Activated CD4-positive, alpha-beta memory T cell treated with anti-CD3 and anti-CD28 coated beads for 36 hours (primary cell): ENCODE measurements at regions of chr5 and their contacts with region 1.

Region 1: DNA sequence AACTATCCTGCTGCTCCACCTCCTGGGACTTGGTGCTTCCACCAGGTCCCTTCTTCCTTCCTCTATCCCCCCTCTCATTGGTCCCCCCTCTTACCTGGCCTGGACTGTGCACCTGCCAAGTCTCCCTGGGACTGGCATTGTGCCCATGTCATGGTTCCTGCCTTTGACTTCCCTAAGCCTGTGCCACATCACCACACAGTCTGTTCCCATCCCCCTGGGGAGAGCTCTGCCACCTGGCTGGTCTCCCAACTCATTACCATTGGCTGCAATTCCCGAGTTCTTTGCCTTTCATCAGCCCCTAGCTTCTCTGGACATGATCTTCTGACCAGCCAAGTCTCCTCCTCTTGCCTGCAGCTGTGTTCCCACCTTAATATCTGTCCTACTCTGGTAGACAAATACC is 180.3 kb downstream of the SREK1 start:
- DNase-seq: no peak
- H3K4me3 Mint-ChIP-seq: no peak overlapping the region
- H3K27ac Mint-ChIP-seq: no peak overlapping the region
- H3K4me1 Mint-ChIP-seq: peaks cover 10% of the 10 kb centered on the region
- H3K27me3 Mint-ChIP-seq: peaks cover 21% of the 10 kb centered on the region

Region 2: GRCh38 chr5:65907138-65907537 is 417.2 kb before region 1 on chr5:
- CTCF ChIA-PET with region 1: no interaction called
- POLR2A ChIA-PET with region 1: no interaction called
- intact Hi-C with region 1: no loop called
- DNase-seq: no peak
- H3K4me3 Mint-ChIP-seq: no peak overlapping the region
- H3K27ac Mint-ChIP-seq: no peak overlapping the region
- H3K4me1 Mint-ChIP-seq: no peaks in the 10 kb centered on the region
- H3K27me3 Mint-ChIP-seq: no peaks in the 10 kb centered on the region

Region 3: GRCh38 chr5:66440202-66440680 is 115.9 kb after region 1 on chr5:
- CTCF ChIA-PET with region 1: no interaction called
- POLR2A ChIA-PET with region 1: no interaction called
- intact Hi-C with region 1: loop called (anchors 1 kb)
- DNase-seq: peak; percentile 40
- H3K4me3 Mint-ChIP-seq: no peak overlapping the region
- H3K27ac Mint-ChIP-seq: no peak overlapping the region
- H3K4me1 Mint-ChIP-seq: peaks cover 7% of the 10 kb centered on the region
- H3K27me3 Mint-ChIP-seq: no peaks in the 10 kb centered on the region